GM12878 (cell line): ENCODE measurements at regions of chr10 and their contacts with region 1.

Region 1: GRCh38 chr10:96292971-96293920 is 11.0 kb upstream of the DNTT start:
- DNase-seq: no peak
- ATAC-seq: peak; percentile 79
- H3K4me3 ChIP-seq: no peak overlapping the region
- H3K27ac ChIP-seq: no peak overlapping the region
- H3K4me1 ChIP-seq: peaks cover 35% of the 10 kb centered on the region
- H3K27me3 ChIP-seq: no peaks in the 10 kb centered on the region
- CTCF ChIP-seq: peak; percentile 58 to 83 (median 76); a peak in 4 of 6 replicates
- EP300 ChIP-seq: no peak
- POLR2A ChIP-seq: no peak
- RAD21 ChIP-seq: peak; percentile 92

Region 2: DNA sequence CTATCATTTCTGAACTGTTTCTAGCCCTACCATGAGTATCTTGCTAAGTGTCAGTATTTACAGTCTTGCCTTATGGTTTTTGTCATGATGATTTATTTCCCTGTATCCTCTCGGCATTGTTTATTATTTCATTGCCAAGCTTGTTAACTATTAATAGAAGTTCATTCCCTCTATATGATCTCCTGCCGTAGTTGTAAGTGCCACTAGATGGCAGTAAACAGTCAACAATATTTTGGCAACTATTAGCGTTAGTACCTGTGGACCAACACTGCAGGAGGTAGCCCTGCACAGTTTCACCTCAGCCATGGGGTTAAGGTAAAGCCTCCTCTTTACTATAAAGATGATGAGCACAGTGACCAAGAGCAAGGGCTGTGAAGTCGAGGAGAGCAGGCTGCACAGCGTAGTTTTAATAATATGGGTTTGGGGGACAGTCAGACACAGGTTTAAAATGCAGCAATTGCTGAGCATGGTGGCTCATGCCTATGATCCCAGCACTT is 276.0 kb before region 1 on chr10:
- CTCF ChIA-PET with region 1: interaction called, 147 read pairs
- POLR2A ChIA-PET with region 1: interaction called, 3 read pairs
- RAD21 ChIA-PET with region 1: interaction called, 62 read pairs
- SMC1A ChIA-PET with region 1: interaction called, 66 read pairs
- in situ Hi-C with region 1: loop called (anchors 5 kb)
- intact Hi-C with region 1: loop called (anchors 2 kb)
- DNase-seq: peak; percentile 32
- ATAC-seq: peak; percentile 99
- H3K4me3 ChIP-seq: no peak overlapping the region
- H3K27ac ChIP-seq: no peak overlapping the region
- H3K4me1 ChIP-seq: no peaks in the 10 kb centered on the region
- H3K27me3 ChIP-seq: no peaks in the 10 kb centered on the region
- CTCF ChIP-seq: peak; percentile 75 to 79 (median 77)
- EP300 ChIP-seq: no peak
- POLR2A ChIP-seq: no peak
- RAD21 ChIP-seq: peak; percentile 90

Region 3: GRCh38 chr10:96129387-96130325 is 163.6 kb before region 1 on chr10 and contains the start of gene ZNF518A:
- CTCF ChIA-PET with region 1: interaction called, 4 read pairs
- POLR2A ChIA-PET with region 1: interaction called, 4 read pairs
- RAD21 ChIA-PET with region 1: interaction called, 4 read pairs
- SMC1A ChIA-PET with region 1: interaction called, 17 read pairs
- in situ Hi-C with region 1: no loop called
- intact Hi-C with region 1: loop called (anchors 5 kb)
- DNase-seq: peak; percentile 82
- ATAC-seq: peak; percentile 91
- H3K4me3 ChIP-seq: peak within 1 kb of the TSS; percentile 87
- H3K27ac ChIP-seq: peak within 1 kb of the TSS; percentile 100
- H3K4me1 ChIP-seq: no peaks in the 10 kb centered on the region; the same call in 1 of the 2 replicates
- H3K27me3 ChIP-seq: no peaks in the 10 kb centered on the region
- CTCF ChIP-seq: no peak
- EP300 ChIP-seq: no peak
- POLR2A ChIP-seq: peak; percentile 92
- RAD21 ChIP-seq: no peak
- polyA plus RNA-seq, gene ZNF518A: 3.7 to 11.3 TPM

Region 4: GRCh38 chr10:96229568-96230030 is 63.6 kb before region 1 on chr10:
- CTCF ChIA-PET with region 1: interaction called, 790 read pairs
- POLR2A ChIA-PET with region 1: interaction called, 60 read pairs
- RAD21 ChIA-PET with region 1: interaction called, 428 read pairs
- SMC1A ChIA-PET with region 1: interaction called, 424 read pairs
- in situ Hi-C with region 1: loop called (anchors 5 kb)
- intact Hi-C with region 1: loop called (anchors 1 kb)
- DNase-seq: peak; percentile 24
- ATAC-seq: peak; percentile 86
- H3K4me3 ChIP-seq: no peak overlapping the region
- H3K27ac ChIP-seq: peak overlapping the region; percentile 51
- H3K4me1 ChIP-seq: peaks cover 13% of the 10 kb centered on the region
- H3K27me3 ChIP-seq: no peaks in the 10 kb centered on the region
- CTCF ChIP-seq: peak; percentile 93 to 98 (median 93)
- EP300 ChIP-seq: no peak
- POLR2A ChIP-seq: no peak; the same call in 1 of the 2 replicates
- RAD21 ChIP-seq: peak; percentile 89

Region 5: DNA sequence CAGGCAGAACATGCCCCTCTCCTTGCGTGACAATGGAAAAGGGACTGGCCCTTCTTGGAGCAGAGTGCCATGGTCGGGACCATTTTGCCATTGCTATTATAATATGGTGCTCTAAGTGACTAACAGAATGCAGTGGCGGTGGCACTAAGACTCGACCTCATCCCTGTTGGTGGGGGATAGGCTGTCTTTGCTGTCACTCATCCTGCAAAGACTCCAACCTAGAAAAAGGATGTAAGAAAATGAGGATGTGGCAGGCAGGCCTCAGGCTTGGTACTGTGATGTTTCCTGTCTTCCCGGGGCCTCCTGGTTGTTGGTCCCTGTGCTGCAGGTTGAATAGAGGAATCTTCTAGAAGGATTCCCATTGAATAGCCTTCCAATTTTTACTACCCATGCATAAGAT is 40.5 kb before region 1 on chr10:
- CTCF ChIA-PET with region 1: interaction called, 24 read pairs
- POLR2A ChIA-PET with region 1: interaction called, 5 read pairs
- RAD21 ChIA-PET with region 1: interaction called, 10 read pairs
- SMC1A ChIA-PET with region 1: interaction called, 37 read pairs
- in situ Hi-C with region 1: no loop called
- intact Hi-C with region 1: no loop called
- DNase-seq: no peak
- ATAC-seq: no peak; the same call in 2 of the 3 replicates
- H3K4me3 ChIP-seq: no peak overlapping the region
- H3K27ac ChIP-seq: no peak overlapping the region
- H3K4me1 ChIP-seq: peaks cover 7% of the 10 kb centered on the region
- H3K27me3 ChIP-seq: no peaks in the 10 kb centered on the region
- CTCF ChIP-seq: no peak
- EP300 ChIP-seq: no peak
- POLR2A ChIP-seq: no peak
- RAD21 ChIP-seq: no peak

Region 6: GRCh38 chr10:96271016-96271829 is 22.0 kb before region 1 on chr10 and contains the start of gene BLNK:
- CTCF ChIA-PET with region 1: interaction called, 213 read pairs
- POLR2A ChIA-PET with region 1: interaction called, 174 read pairs
- RAD21 ChIA-PET with region 1: interaction called, 362 read pairs
- SMC1A ChIA-PET with region 1: interaction called, 305 read pairs
- in situ Hi-C with region 1: no loop called
- intact Hi-C with region 1: no loop called
- DNase-seq: peak; percentile 92
- ATAC-seq: peak; percentile 79
- H3K4me3 ChIP-seq: peak within 1 kb of the TSS; percentile 89
- H3K27ac ChIP-seq: peak within 1 kb of the TSS; percentile 98
- H3K4me1 ChIP-seq: peaks cover 32% of the 10 kb centered on the region
- H3K27me3 ChIP-seq: no peaks in the 10 kb centered on the region
- CTCF ChIP-seq: no peak
- EP300 ChIP-seq: peak in 1 of 2 experiments; percentile 74; a peak in 2 of 4 replicates
- POLR2A ChIP-seq: peak; percentile 93
- RAD21 ChIP-seq: no peak
- polyA plus RNA-seq, gene BLNK: 165 to 201 TPM